PC-9 (cell line): ENCODE measurements at regions of chr9 and their contacts with region 1.

Region 1: GRCh38 chr9:95317119-95317892 is at the start of gene FANCC:
- DNase-seq: peak; percentile 73 to 91
- H3K4me3 ChIP-seq: peak within 1 kb of the TSS; percentile 80
- H3K27ac ChIP-seq: peak within 1 kb of the TSS; percentile 97
- H3K4me1 ChIP-seq: peaks cover 37% of the 10 kb centered on the region
- H3K27me3 ChIP-seq: no peaks in the 10 kb centered on the region
- CTCF ChIP-seq: no peak
- total RNA-seq, gene FANCC: 31.5 and 44.7 TPM in 2 replicates

Region 2: GRCh38 chr9:95425910-95426551 is 108.7 kb after region 1 on chr9:
- CTCF ChIA-PET with region 1: no interaction called
- POLR2A ChIA-PET with region 1: interaction called, 22 read pairs
- intact Hi-C with region 1: loop called (anchors 1 kb)
- DNase-seq: peak in 1 of 2 experiments; percentile 20
- H3K4me3 ChIP-seq: peak overlapping the region; percentile 92
- H3K27ac ChIP-seq: peak overlapping the region; percentile 87
- H3K4me1 ChIP-seq: peaks cover 12% of the 10 kb centered on the region
- H3K27me3 ChIP-seq: no peaks in the 10 kb centered on the region
- CTCF ChIP-seq: no peak

Region 3: GRCh38 chr9:95910023-95910707 is 592.9 kb after region 1 on chr9:
- CTCF ChIA-PET with region 1: no interaction called
- POLR2A ChIA-PET with region 1: no interaction called
- intact Hi-C with region 1: no loop called
- DNase-seq: no peak
- H3K4me3 ChIP-seq: no peak overlapping the region
- H3K27ac ChIP-seq: no peak overlapping the region
- H3K4me1 ChIP-seq: no peaks in the 10 kb centered on the region
- H3K27me3 ChIP-seq: no peaks in the 10 kb centered on the region
- CTCF ChIP-seq: no peak